Head of caudate nucleus (tissue), 42 donors: ENCODE measurements at regions of chr1 and their contacts with region 1.

Region 1: DNA sequence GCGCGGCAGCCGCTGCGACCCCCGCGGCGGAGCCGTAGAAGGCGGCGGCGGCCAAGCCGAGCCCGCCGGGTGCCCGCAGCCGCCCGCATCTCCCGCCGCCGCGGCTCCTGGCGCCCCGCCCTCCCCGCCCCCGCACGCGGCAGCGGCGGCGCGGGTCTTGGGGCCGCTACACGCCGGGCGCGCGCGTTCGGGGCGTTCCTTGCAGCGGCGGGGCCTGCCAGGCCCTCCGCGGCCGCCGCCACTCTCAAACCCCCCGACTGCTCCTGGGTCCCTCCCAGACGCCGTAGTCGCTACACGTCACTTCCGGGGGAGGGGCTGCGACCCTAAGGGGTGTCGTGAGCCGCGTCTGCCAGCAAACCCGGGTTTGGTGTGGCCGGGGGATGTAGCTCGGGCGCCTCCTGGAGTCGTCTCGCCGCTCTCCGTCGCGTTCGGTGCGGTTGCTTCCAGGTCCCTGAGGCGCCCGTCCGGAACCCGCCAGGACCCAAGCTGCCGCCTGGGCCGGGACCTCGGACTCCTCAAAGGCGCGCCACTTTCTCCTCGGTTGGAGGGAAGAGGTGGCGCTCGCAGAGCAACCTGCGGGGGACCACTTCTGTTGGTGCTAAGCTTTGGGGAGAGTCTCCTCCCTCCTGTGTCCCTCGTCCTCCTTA is at the start of gene ELK4:
- DNase-seq: peak; percentile 94 to 100 (median 99)

Region 2: GRCh38 chr1:205458777-205459566 is 172.9 kb before region 1 on chr1:
- intact Hi-C with region 1: no loop called
- DNase-seq: peak in 1 of 42 donors; percentile 30

Region 3: GRCh38 chr1:205528887-205529825 is 102.7 kb before region 1 on chr1:
- intact Hi-C with region 1: loop called (anchors 2 kb)
- DNase-seq: peak; percentile 72 to 97 (median 91)

Region 4: GRCh38 chr1:205591522-205592351 is 40.1 kb before region 1 on chr1:
- intact Hi-C with region 1: loop called (anchors 2 kb)
- DNase-seq: peak; percentile 87 to 97 (median 93)

Region 5: GRCh38 chr1:205775015-205775716 is 143.3 kb after region 1 on chr1 and contains the start of gene RAB29:
- intact Hi-C with region 1: no loop called
- DNase-seq: peak; percentile 79 to 97 (median 91)